Activated CD4-positive, alpha-beta T cell treated with anti-CD3 and anti-CD28 coated beads, Interleukin-2, amount 10 ng/mL, durations not matched to agents 24 days and 14 days (primary cell): ENCODE measurements at regions of chr7 and their contacts with region 1.

Region 1: DNA sequence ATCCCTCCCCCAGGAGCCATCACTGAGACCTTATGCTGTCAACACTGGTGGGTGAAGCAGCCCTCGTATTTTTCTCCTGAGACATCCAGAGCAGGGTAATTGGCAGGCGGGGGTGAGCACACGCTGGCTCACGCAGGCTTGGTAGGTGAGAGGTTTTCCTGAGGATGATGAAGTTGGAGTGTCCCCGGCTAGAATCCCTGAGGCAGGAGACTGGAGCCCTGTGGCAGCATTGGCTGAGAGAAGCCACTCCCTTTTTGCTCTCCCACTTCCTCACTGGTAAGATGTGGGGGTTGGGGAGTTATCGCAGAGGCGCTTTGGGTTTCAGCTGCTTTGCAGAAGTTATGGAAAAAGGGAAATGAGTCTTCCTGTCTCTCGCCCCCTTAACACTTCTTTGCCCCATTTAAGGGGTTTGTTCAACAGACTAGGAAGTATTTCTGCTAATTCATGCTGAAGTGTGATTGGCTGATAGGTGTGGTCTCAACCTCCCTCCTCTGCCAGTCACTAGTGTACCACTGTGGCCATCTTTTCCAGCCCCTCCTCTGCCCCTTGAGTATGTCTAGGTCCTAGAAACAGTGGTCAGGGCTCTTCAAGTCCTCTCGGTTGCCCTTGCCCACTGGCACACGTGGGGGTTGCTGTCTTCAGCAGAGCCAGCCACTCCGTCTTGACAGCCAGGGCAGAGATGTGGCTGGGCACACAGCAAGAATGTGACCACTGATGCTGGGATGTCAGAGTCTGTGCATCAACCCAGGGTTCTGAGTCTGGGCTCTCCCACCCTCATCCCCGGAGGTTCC is 5.7 kb downstream of the ARPC1B start:
- DNase-seq: peak; percentile 83
- H3K4me3 Mint-ChIP-seq: peak overlapping the region; percentile 77
- H3K27ac Mint-ChIP-seq: peak overlapping the region; percentile 90
- H3K4me1 Mint-ChIP-seq: peaks cover 44% of the 10 kb centered on the region
- H3K27me3 Mint-ChIP-seq: no peaks in the 10 kb centered on the region

Region 2: DNA sequence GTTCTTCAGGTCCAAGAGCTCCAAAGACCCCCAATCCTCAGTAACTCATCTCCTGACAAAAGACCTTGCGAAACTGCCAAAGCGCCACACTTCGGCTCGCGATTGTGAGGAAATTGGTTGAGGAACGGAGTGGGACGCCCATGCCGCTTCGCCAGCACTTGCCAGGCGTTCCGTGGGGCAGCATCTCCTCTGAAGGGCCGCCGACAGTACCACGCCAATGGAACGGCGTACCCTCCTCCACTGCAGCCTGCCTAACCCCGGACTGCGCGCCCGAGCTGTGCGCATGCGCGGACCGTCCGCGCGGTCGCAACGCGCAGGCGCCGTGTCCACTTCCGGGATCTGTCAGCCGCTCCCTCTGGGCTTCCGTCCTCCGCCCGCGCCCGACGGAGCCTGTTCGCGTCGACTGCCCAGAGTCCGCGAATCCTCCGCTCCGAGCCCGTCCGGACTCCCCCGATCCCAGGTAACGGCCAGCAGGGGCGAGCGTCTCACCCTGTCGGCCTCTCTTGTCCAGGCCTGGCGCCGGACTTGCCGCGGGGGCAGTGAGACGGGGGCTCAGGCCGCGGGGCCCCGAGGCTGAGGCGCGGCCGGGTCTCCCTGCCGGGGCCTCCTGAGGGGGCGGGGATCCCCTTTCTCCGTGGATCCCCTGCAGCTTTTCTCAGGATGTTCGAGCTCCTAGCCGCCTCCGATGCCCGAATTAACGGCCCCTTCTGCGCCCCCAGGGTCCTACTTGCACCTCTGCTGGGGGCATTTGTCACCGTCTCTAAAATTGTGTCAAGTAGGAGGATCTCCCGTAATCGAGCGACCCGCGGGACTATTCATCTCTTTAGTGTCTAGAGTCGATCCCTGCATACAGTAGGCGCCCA is 54.5 kb before region 1 on chr7 and contains the start of gene ARPC1A:
- intact Hi-C with region 1: loop called (anchors 5 kb)
- DNase-seq: peak; percentile 98
- H3K4me3 Mint-ChIP-seq: peak within 1 kb of the TSS; percentile 91
- H3K27ac Mint-ChIP-seq: peak within 1 kb of the TSS; percentile 90
- H3K4me1 Mint-ChIP-seq: peaks cover 35% of the 10 kb centered on the region
- H3K27me3 Mint-ChIP-seq: peaks cover 3% of the 10 kb centered on the region
- total RNA-seq, gene ARPC1A: 76.0 and 80.8 TPM in 2 replicates

Region 3: GRCh38 chr7:99438573-99439480 is 58.6 kb after region 1 on chr7 and contains the starts of genes CPSF4 and PTCD1:
- intact Hi-C with region 1: loop called (anchors 2 kb)
- DNase-seq: peak; percentile 97
- H3K4me3 Mint-ChIP-seq: peak within 1 kb of the TSS; percentile 96
- H3K27ac Mint-ChIP-seq: peak within 1 kb of the TSS; percentile 89
- H3K4me1 Mint-ChIP-seq: peaks cover 23% of the 10 kb centered on the region
- H3K27me3 Mint-ChIP-seq: no peaks in the 10 kb centered on the region
- total RNA-seq, gene CPSF4: 83.5 and 89.0 TPM in 2 replicates
- total RNA-seq, gene PTCD1: 10.5 and 10.7 TPM in 2 replicates